Common myeloid progenitor, CD34-positive (primary cell): ENCODE measurements at regions of chr5 and their contacts with region 1.

Region 1: GRCh38 chr5:151523335-151523734 is 67.8 kb downstream of the FAT2 start:
- DNase-seq: peak; percentile 29 to 66 (median 57)
- H3K4me3 ChIP-seq: no peak overlapping the region
- H3K27ac ChIP-seq: no peak overlapping the region
- H3K4me1 ChIP-seq: peaks cover 0 to 6% (median 3%) of the 10 kb centered on the region in 4 experiments
- H3K27me3 ChIP-seq: no peaks in the 10 kb centered on the region

Region 2: DNA sequence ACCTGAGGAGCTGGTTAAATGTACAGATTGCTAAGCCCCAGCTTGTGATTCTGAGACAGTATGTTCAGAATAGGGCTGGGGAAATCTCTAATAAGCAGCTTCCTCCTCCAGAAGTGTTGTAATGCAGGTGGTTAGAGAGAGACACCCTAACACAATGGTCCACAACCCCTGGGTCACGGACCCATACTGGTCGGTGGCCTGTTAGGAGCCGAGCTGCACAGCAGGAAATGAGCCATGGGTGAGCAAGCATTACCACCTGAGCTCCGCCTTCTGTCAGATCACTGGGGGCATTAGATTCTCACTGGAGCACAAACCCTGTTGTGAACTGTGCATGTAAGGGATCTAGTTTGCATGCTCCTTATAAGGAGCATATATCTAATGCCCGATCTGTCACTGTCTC is 14.1 kb before region 1 on chr5:
- CTCF ChIA-PET with region 1: interaction called, 11 read pairs
- POLR2A ChIA-PET with region 1: interaction called, 3 read pairs
- DNase-seq: no peak
- H3K4me3 ChIP-seq: no peak overlapping the region
- H3K27ac ChIP-seq: no peak overlapping the region
- H3K4me1 ChIP-seq: no peaks in the 10 kb centered on the region
- H3K27me3 ChIP-seq: no peaks in the 10 kb centered on the region

Region 3: GRCh38 chr5:151612689-151613427 is 89.5 kb after region 1 on chr5:
- CTCF ChIA-PET with region 1: no interaction called
- POLR2A ChIA-PET with region 1: no interaction called
- DNase-seq: peak; percentile 19 to 72 (median 40)
- H3K4me3 ChIP-seq: no peak overlapping the region
- H3K27ac ChIP-seq: no peak overlapping the region
- H3K4me1 ChIP-seq: peaks cover 0 to 13% (median 5%) of the 10 kb centered on the region in 4 experiments
- H3K27me3 ChIP-seq: no peaks in the 10 kb centered on the region

Region 4: DNA sequence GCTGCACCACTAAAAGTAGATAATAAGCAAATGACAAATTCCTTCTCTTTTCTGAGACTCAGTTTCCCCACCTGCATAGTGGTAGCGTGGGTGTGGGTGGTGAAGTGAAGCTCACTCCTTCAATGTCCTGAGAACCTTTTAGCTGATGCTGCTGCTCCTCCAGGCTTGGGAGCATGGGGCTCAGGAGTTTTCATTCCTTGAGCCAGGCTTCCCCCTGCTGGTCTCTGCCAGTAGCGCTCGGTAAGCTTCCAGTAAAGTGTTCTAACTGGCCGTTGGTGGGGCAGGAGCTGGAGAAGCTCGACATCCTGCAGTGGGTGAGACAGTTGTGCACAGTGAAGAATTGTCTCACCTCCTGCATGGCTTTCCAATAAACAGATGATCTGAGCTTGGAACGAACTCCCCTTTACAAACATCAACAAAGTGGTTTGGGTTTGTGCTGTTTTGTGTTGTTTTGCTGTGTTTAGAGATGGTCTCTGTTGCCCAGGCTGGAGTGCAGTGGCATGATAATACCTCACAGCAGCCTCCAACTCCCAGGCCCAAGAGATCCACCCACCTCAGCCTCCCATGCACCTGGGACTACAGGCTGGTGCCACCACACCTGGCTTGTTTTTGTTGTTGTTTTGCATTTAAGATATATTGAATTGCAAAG is 128.8 kb after region 1 on chr5:
- CTCF ChIA-PET with region 1: interaction called, 27 read pairs
- POLR2A ChIA-PET with region 1: no interaction called
- DNase-seq: peak; percentile 68 to 79 (median 70)
- H3K4me3 ChIP-seq: no peak overlapping the region
- H3K27ac ChIP-seq: no peak overlapping the region
- H3K4me1 ChIP-seq: no peaks in the 10 kb centered on the region
- H3K27me3 ChIP-seq: no peaks in the 10 kb centered on the region

Region 5: DNA sequence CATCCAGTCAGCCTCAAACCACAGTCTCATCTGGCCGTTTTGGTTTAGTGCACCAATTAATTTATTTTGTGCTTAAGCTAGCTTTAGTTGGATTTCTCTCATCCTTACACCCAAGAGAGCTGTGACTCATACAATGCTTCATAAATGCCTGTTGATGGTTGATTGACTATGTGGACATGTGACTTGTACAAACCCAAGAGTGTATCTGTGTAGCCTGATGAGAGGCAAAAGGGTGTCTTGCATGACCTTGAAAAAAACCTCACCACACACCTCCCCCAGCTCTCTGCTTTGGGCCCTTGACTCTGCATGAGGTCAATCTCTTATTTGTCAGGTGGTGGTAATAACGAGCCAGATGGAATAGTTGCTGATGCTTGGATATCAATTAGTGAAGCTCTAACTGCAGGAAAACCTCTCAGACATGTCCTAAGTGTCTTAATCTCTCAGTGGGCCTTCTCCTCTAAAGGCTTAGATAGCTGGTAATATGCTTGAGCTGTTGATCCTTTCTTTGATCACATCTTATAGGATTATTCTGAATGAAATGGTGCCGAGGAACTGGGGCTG is 411.9 kb after region 1 on chr5:
- CTCF ChIA-PET with region 1: no interaction called
- POLR2A ChIA-PET with region 1: no interaction called
- DNase-seq: no peak
- H3K4me3 ChIP-seq: no peak overlapping the region
- H3K27ac ChIP-seq: no peak overlapping the region
- H3K4me1 ChIP-seq: no peaks in the 10 kb centered on the region
- H3K27me3 ChIP-seq: no peaks in the 10 kb centered on the region